ENCODE measurements at regions of chr5 and their contacts with region 1.

Region 1: DNA sequence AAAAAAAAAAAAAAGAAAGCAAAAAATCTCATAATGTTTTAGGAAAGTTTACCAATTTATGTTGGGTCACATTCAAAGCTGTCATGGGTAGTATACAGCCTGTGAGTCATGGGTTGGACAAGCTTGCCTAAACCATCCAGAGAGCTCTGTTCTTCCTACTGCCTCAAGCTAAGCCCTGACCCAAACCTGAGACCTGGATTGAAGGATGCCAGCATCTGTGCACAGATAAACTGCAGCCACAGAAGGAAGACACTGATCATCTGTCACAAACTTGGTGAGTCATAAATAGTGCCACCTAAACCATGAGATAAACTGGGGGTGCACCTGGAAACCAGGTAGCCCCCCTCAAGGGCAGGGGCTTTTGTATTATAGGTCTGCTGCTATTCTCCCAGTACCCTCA is 31.0 kb downstream of the CSF2 start:
- DNase-seq: no peak
- ATAC-seq: no peak
- H3K4me3 Mint-ChIP-seq: peak overlapping the region; percentile 29
- H3K27ac Mint-ChIP-seq: peak overlapping the region; percentile 85
- H3K4me1 Mint-ChIP-seq: peaks cover 56% of the 10 kb centered on the region
- H3K27me3 Mint-ChIP-seq: no peaks in the 10 kb centered on the region

Region 2: GRCh38 chr5:131595088-131596033 is 509.2 kb before region 1 on chr5:
- POLR2A ChIA-PET with region 1: interaction called, 13 read pairs
- DNase-seq: no peak
- ATAC-seq: peak; percentile 91
- H3K4me3 Mint-ChIP-seq: peak overlapping the region; percentile 74
- H3K27ac Mint-ChIP-seq: peak overlapping the region; percentile 83
- H3K4me1 Mint-ChIP-seq: peaks cover 36% of the 10 kb centered on the region
- H3K27me3 Mint-ChIP-seq: no peaks in the 10 kb centered on the region

Region 3: DNA sequence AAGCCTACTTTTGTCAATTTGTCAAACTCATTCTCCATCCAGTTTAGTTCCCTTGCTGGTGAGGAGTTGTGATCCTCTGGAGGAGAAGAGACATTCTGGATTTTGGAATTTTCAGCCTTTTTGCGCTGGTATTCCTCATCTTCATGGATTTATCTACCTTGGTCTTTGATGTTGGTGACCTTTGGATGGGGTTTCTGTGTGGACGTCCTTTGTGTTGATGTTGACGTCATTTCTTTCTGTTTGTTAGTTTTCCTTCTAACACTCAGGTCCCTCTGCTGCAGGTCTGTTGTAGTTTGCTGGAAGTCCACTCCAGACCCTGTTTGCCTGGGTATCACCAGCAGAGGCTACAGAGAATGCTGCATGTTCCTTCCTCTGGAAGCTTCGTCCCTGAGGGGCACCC is 51.9 kb after region 1 on chr5:
- POLR2A ChIA-PET with region 1: no interaction called
- DNase-seq: no peak
- ATAC-seq: no peak
- H3K4me3 Mint-ChIP-seq: no peak overlapping the region
- H3K27ac Mint-ChIP-seq: no peak overlapping the region
- H3K4me1 Mint-ChIP-seq: no peaks in the 10 kb centered on the region
- H3K27me3 Mint-ChIP-seq: peaks cover 19% of the 10 kb centered on the region